ENCODE measurements at regions of chr2 and their contacts with region 1.

Region 1: DNA sequence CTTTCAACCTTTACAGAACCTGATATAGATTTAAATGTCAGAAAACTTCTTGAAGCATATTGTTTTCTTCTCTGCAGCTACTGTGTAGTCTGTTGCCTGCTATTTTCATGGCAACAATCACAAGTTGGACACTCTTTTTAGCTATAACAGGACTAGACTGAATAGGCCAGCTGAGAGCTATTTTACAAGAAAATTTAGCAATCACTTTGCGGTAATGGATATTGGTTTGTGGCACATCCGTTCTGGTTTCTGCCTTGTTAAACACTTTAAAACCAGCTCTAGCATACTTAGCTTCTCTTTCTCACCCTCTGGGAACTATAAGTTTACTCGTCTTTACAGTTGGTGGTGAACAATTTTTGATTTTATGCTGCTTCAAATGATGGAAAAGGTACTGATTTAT is 125.7 kb downstream of the MAP2 start:
- DNase-seq: no peak
- H3K4me3 ChIP-seq: no peak overlapping the region
- H3K27ac ChIP-seq: no peak overlapping the region
- H3K4me1 ChIP-seq: no peaks in the 10 kb centered on the region
- H3K27me3 ChIP-seq: no peaks in the 10 kb centered on the region

Region 2: DNA sequence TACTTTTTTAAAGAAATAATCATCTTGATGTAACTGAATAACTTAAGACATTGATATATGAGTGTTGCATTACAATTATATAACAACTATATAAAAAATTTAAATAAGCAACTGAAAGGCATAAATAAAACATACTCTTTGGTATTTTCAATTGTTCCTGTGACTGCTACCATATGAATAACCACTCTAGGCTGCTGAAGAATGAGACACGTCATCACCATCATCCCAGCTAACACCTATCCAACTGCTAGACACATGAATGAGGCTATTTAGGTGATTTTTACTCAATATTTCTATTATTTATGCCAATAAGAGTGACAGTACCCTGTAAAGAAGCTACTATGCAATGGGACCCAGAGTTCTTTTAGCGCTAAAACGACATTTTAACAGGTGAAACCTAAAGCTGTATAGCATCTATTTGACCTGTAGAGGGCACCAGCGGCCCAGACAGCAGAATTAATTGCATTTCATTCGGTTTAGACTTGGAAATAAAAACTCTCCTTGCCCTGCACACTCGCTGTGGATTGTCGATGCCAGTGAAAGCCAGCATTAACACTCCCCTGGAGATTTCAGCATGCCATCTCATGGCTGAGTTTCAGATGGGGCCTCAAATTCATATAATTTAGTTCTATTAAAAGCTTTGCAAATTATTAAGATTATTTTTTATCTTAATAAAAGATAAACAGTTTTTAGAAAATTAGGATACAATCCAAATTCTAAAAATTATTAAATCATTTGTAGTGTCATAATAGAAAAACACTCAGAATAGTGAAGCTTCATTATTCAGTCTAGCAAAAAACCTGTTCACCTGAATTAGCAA is 215.2 kb before region 1 on chr2:
- in situ Hi-C with region 1: loop called (anchors 10 kb)
- DNase-seq: peak; percentile 72
- H3K4me3 ChIP-seq: no peak overlapping the region
- H3K27ac ChIP-seq: no peak overlapping the region
- H3K4me1 ChIP-seq: no peaks in the 10 kb centered on the region
- H3K27me3 ChIP-seq: peaks cover 4% of the 10 kb centered on the region; the same call in 1 of the 2 replicates

Region 3: DNA sequence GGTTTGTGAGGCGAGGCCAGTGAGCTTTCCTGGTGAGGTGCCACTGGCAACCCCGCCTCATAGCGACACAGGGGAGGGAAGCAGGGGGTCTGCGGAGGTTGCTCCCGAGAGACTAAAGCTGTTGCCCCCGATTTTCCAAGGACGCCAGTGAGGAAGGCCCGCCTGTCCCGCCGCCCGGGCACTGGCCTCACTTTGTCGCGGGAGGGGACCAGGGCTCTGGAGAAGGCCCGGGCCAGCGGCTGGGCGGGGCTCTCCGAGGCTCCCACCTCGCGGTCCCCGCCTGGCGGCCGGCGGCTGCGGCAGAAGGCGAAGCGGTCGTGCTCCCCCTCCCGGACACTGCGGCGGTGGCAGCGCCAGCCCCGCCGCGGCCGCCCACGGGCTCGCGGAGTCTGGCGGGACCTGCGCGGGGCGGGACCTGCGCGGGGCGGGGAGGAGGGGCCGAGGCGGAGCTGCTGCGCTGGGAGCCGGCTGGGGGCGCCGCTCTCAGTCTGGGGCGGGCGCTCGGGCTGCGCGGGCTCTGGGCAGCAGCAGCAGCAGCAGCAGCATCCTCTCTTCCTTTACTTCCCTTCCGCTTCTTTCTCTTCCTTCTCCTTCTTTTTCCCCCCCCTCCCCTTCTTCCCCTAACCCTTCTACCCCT is 125.9 kb before region 1 on chr2 and contains the start of gene MAP2:
- in situ Hi-C with region 1: loop called (anchors 10 kb)
- DNase-seq: peak; percentile 93
- H3K4me3 ChIP-seq: peak within 1 kb of the TSS; percentile 82
- H3K27ac ChIP-seq: no peak within 1 kb of the TSS
- H3K4me1 ChIP-seq: no peaks in the 10 kb centered on the region
- H3K27me3 ChIP-seq: no peaks in the 10 kb centered on the region; the same call in 1 of the 2 replicates
- total RNA-seq, gene MAP2: 1.0 and 7.6 TPM in 2 replicates

Region 4: GRCh38 chr2:209671020-209671680 is 121.6 kb after region 1 on chr2:
- in situ Hi-C with region 1: no loop called
- DNase-seq: no peak
- H3K4me3 ChIP-seq: no peak overlapping the region
- H3K27ac ChIP-seq: no peak overlapping the region
- H3K4me1 ChIP-seq: no peaks in the 10 kb centered on the region
- H3K27me3 ChIP-seq: no peaks in the 10 kb centered on the region

Region 5: GRCh38 chr2:209696836-209697711 is 147.5 kb after region 1 on chr2:
- in situ Hi-C with region 1: no loop called
- DNase-seq: no peak
- H3K4me3 ChIP-seq: no peak overlapping the region
- H3K27ac ChIP-seq: no peak overlapping the region
- H3K4me1 ChIP-seq: no peaks in the 10 kb centered on the region
- H3K27me3 ChIP-seq: no peaks in the 10 kb centered on the region